ENCODE measurements at regions of chr6 and their contacts with region 1.

Region 1: GRCh38 chr6:33200219-33201146 is at the starts of genes RXRB and SLC39A7:
- DNase-seq: peak; percentile 100
- ATAC-seq: peak; percentile 73
- H3K4me3 Mint-ChIP-seq: peak within 1 kb of the TSS; percentile 100
- H3K27ac Mint-ChIP-seq: peak within 1 kb of the TSS; percentile 98
- H3K4me1 Mint-ChIP-seq: peaks cover 65% of the 10 kb centered on the region
- H3K27me3 Mint-ChIP-seq: no peaks in the 10 kb centered on the region
- total RNA-seq, gene RXRB: 33.5 to 34.5 TPM
- total RNA-seq, gene SLC39A7: 45.6 to 50.8 TPM

Region 2: GRCh38 chr6:33118525-33119123 is 81.9 kb before region 1 on chr6:
- CTCF ChIA-PET with region 1: interaction called, 18 read pairs
- POLR2A ChIA-PET with region 1: no interaction called
- DNase-seq: peak; percentile 51
- ATAC-seq: peak; percentile 61
- H3K4me3 Mint-ChIP-seq: no peak overlapping the region
- H3K27ac Mint-ChIP-seq: no peak overlapping the region
- H3K4me1 Mint-ChIP-seq: peaks cover 17% of the 10 kb centered on the region
- H3K27me3 Mint-ChIP-seq: peaks cover 52% of the 10 kb centered on the region

Region 3: GRCh38 chr6:33161354-33162331 is 38.8 kb before region 1 on chr6:
- CTCF ChIA-PET with region 1: interaction called, 20 read pairs
- POLR2A ChIA-PET with region 1: no interaction called
- DNase-seq: peak; percentile 87
- ATAC-seq: peak; percentile 98
- H3K4me3 Mint-ChIP-seq: peak overlapping the region; percentile 80
- H3K27ac Mint-ChIP-seq: peak overlapping the region; percentile 89
- H3K4me1 Mint-ChIP-seq: peaks cover 20% of the 10 kb centered on the region
- H3K27me3 Mint-ChIP-seq: peaks cover 3% of the 10 kb centered on the region

Region 4: GRCh38 chr6:33183071-33183683 is 17.3 kb before region 1 on chr6:
- CTCF ChIA-PET with region 1: interaction called, 19 read pairs
- POLR2A ChIA-PET with region 1: interaction called, 3 read pairs
- DNase-seq: no peak
- ATAC-seq: peak; percentile 32
- H3K4me3 Mint-ChIP-seq: peak overlapping the region; percentile 39
- H3K27ac Mint-ChIP-seq: peak overlapping the region; percentile 97
- H3K4me1 Mint-ChIP-seq: peaks cover 24% of the 10 kb centered on the region
- H3K27me3 Mint-ChIP-seq: peaks cover 12% of the 10 kb centered on the region

Measured in activated CD8-positive, alpha-beta T cell treated with anti-CD3 and anti-CD28 coated beads, Interleukin-2, amount 10 ng/mL, durations not matched to agents 7 days and 5 days (primary cell).